CD4-positive, alpha-beta T cell (primary cell): ENCODE measurements at regions of chr6 and their contacts with region 1.

Region 1: GRCh38 chr6:3258720-3259490 is at the start of gene PSMG4:
- DNase-seq: peak; percentile 83 to 96 (median 92)
- ATAC-seq: peak; percentile 74
- H3K4me3 ChIP-seq: peak within 1 kb of the TSS; percentile 80
- H3K4me3 Mint-ChIP-seq: peak within 1 kb of the TSS; percentile 96
- H3K27ac ChIP-seq: peak within 1 kb of the TSS in 1 of 2 donors; percentile 50
- H3K27ac Mint-ChIP-seq: peak within 1 kb of the TSS; percentile 92
- H3K4me1 ChIP-seq: peaks cover 45% of the 10 kb centered on the region
- H3K4me1 Mint-ChIP-seq: peaks cover 42% of the 10 kb centered on the region
- H3K27me3 ChIP-seq: no peaks in the 10 kb centered on the region
- H3K27me3 Mint-ChIP-seq: no peaks in the 10 kb centered on the region
- CTCF ChIP-seq: no peak
- total RNA-seq, gene PSMG4: 12.3 to 12.8 TPM

Region 2: DNA sequence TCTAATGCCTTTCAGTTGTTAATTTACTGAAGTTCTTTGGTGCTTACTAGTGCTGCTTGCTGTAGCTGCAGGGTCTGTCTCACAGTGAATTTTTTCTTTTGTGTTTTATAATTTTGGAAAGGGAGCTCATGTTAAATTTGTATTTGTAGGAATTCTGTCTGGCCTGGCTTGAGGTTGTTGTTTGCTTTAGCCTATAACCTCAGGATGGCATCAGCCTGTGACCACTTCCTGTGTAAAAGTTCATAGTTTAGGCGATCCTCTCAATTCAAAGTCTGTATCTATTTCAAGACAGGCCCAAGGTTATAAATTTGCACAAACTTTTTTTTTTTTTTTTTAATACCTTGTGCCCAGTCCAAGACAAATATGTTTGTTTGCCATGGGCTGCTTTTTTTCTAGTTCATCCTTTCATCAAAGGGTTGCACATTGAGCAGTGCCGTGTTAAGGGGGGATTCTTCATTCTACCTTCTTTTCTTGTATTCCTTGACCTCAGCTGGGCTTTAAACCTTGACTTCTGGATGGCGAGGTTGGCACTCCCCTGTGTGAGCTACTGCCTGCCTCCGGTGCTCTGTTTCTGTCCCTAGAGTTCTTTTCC is 183.3 kb before region 1 on chr6:
- CTCF ChIA-PET with region 1: no interaction called
- POLR2A ChIA-PET with region 1: no interaction called
- intact Hi-C with region 1: loop called in 1 of 2 experiments (anchors 5 kb)
- DNase-seq: peak in 2 of 14 experiments; percentile 8 to 48
- ATAC-seq: no peak
- H3K4me3 ChIP-seq: no peak overlapping the region
- H3K4me3 Mint-ChIP-seq: peak overlapping the region; percentile 57
- H3K27ac ChIP-seq: no peak overlapping the region
- H3K27ac Mint-ChIP-seq: peak overlapping the region; percentile 13
- H3K4me1 ChIP-seq: peaks cover 44% of the 10 kb centered on the region
- H3K4me1 Mint-ChIP-seq: peaks cover 67% of the 10 kb centered on the region
- H3K27me3 ChIP-seq: no peaks in the 10 kb centered on the region
- H3K27me3 Mint-ChIP-seq: no peaks in the 10 kb centered on the region
- CTCF ChIP-seq: no peak

Region 3: DNA sequence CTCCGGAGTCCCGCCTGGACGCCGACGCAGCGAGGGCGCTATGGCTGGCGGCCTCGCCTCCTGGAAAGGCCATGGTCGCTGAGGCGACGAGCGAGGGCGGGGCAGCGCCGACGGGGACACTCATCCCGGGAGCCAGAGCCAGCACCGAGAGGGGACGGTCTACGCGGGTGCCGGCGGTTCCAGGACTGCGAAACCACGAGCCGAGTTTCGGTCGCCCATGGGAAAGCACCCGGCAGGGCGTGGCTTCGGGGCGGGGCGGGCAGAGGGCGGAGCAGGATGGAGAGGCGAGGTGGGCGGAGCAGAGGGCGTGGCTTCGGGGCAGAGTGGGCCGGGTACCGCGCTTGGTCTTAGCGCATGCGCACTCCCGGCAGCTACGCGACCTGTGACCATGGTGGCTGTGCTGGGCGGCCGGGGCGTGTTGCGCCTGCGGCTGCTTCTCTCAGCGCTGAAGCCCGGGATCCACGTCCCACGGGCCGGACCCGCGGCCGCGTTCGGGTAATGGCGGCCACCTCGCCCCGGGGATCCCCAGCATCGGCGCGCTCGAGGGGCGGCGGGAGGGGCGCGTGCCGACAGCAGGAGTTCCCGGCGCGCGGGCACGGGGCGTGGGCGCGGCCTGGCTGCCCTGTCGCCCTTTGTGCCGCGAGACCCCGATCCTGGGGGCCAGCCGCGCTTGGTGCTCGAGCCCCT is 140.4 kb before region 1 on chr6 and contains the start of gene BPHL:
- CTCF ChIA-PET with region 1: no interaction called
- POLR2A ChIA-PET with region 1: interaction called, 3 read pairs
- intact Hi-C with region 1: loop called (anchors 2 kb)
- DNase-seq: peak; percentile 98 to 100 (median 99)
- ATAC-seq: peak; percentile 90
- H3K4me3 ChIP-seq: peak within 1 kb of the TSS; percentile 67
- H3K4me3 Mint-ChIP-seq: peak within 1 kb of the TSS; percentile 93
- H3K27ac ChIP-seq: peak within 1 kb of the TSS; percentile 91 to 96
- H3K27ac Mint-ChIP-seq: peak within 1 kb of the TSS; percentile 91
- H3K4me1 ChIP-seq: peaks cover 15% of the 10 kb centered on the region
- H3K4me1 Mint-ChIP-seq: peaks cover 19% of the 10 kb centered on the region
- H3K27me3 ChIP-seq: no peaks in the 10 kb centered on the region
- H3K27me3 Mint-ChIP-seq: no peaks in the 10 kb centered on the region
- CTCF ChIP-seq: no peak
- total RNA-seq, gene BPHL: 5.2 to 5.7 TPM

Region 4: GRCh38 chr6:3157131-3157927 is 101.6 kb before region 1 on chr6 and contains the start of gene TUBB2A:
- CTCF ChIA-PET with region 1: no interaction called
- POLR2A ChIA-PET with region 1: interaction called, 4 read pairs
- intact Hi-C with region 1: loop called (anchors 2 to 5 kb)
- DNase-seq: peak; percentile 79 to 94 (median 87)
- ATAC-seq: peak; percentile 62
- H3K4me3 ChIP-seq: peak within 1 kb of the TSS; percentile 75
- H3K4me3 Mint-ChIP-seq: peak within 1 kb of the TSS; percentile 91
- H3K27ac ChIP-seq: peak within 1 kb of the TSS; percentile 52 to 59
- H3K27ac Mint-ChIP-seq: peak within 1 kb of the TSS; percentile 87
- H3K4me1 ChIP-seq: peaks cover 46% of the 10 kb centered on the region
- H3K4me1 Mint-ChIP-seq: peaks cover 41% of the 10 kb centered on the region
- H3K27me3 ChIP-seq: no peaks in the 10 kb centered on the region
- H3K27me3 Mint-ChIP-seq: peaks cover 4% of the 10 kb centered on the region
- CTCF ChIP-seq: peak; percentile 42
- total RNA-seq, gene TUBB2A: 54.3 to 58.5 TPM